Calu3 (cell line): ENCODE measurements at regions of chr10 and their contacts with region 1.

Region 1: GRCh38 chr10:48363617-48364355 is 57.3 kb downstream of the MAPK8 start:
- DNase-seq: peak; percentile 44
- H3K4me3 Mint-ChIP-seq: peak overlapping the region; percentile 49
- H3K27ac Mint-ChIP-seq: peak overlapping the region; percentile 76
- H3K4me1 Mint-ChIP-seq: peaks cover 52% of the 10 kb centered on the region
- H3K27me3 Mint-ChIP-seq: no peaks in the 10 kb centered on the region
- CTCF ChIP-seq: peak; percentile 62

Region 2: GRCh38 chr10:48309711-48310226 is 54.0 kb before region 1 on chr10:
- CTCF ChIA-PET with region 1: interaction called, 4 read pairs
- intact Hi-C with region 1: loop called (anchors 2 kb)
- DNase-seq: no peak
- H3K4me3 Mint-ChIP-seq: peak overlapping the region; percentile 9
- H3K27ac Mint-ChIP-seq: peak overlapping the region; percentile 52
- H3K4me1 Mint-ChIP-seq: peaks cover 38% of the 10 kb centered on the region
- H3K27me3 Mint-ChIP-seq: peaks cover 2% of the 10 kb centered on the region
- CTCF ChIP-seq: no peak

Region 3: DNA sequence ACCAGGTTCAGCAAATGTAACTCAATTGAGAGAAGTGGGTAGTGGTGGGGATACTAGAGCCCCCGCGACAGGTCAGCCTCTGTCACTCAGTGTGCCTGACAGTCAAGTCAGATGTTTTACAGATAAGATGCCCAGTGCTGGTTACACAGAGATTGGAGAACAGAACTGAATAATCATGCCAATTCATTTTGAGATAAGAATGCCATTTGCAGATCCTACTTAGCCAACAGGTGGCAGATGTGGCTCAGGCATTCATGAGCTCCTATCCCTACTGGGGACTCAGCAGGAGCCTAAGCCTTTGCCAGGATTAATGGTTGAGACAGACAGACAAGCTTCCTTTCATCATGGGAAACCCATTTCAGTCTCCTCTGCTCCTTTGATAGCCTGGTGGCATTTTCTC is 80.5 kb after region 1 on chr10:
- CTCF ChIA-PET with region 1: interaction called, 15 read pairs
- intact Hi-C with region 1: loop called (anchors 2 kb)
- DNase-seq: no peak
- H3K4me3 Mint-ChIP-seq: no peak overlapping the region
- H3K27ac Mint-ChIP-seq: no peak overlapping the region
- H3K4me1 Mint-ChIP-seq: peaks cover 11% of the 10 kb centered on the region
- H3K27me3 Mint-ChIP-seq: peaks cover 9% of the 10 kb centered on the region
- CTCF ChIP-seq: no peak

Region 4: GRCh38 chr10:48476279-48476982 is 112.6 kb after region 1 on chr10:
- CTCF ChIA-PET with region 1: no interaction called
- intact Hi-C with region 1: no loop called
- DNase-seq: no peak
- H3K4me3 Mint-ChIP-seq: no peak overlapping the region
- H3K27ac Mint-ChIP-seq: no peak overlapping the region
- H3K4me1 Mint-ChIP-seq: no peaks in the 10 kb centered on the region
- H3K27me3 Mint-ChIP-seq: peaks cover 62% of the 10 kb centered on the region
- CTCF ChIP-seq: no peak